ENCODE measurements at regions of chr1 and their contacts with region 1.

Region 1: DNA sequence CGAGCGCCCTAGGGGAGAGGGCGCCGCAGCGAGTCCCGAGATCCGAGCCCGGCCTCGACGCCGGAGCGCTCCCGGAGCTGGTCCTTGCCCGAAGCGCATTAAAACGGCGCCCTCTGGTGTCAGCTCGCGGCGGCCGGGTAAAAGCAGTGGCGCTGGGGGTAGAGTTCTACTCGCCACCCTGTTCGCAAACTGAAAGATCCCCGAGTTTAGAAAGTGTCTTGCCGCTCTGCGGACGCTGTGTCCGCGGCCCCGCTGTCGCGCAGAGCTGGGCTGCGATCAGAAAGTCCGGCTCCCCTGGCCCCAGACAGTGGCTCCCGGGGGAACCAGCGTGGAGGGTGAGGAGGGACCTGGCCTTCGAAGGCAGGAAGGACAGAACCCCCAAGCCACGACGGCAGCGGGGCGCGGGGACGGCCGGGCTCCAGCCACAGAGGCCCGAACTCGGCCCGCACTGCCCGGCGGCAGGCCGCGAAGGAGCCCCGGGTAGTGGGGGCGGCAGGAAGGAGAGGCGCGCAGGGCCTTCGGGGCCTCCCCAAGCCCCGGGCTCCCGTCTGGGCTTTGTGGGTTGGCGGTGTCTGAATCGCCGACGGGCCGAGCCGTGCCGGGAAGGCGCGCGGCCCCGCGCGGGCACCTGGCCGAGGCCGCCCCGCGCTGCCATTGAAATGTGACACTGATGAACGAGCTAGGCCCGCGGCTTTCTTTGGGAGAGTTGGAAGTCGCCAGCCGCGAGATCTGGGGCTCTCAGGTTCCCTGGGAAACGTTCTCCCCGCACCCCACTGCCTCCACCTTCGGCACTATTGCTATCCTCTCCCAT is 39.1 kb upstream of the NFIA start:
- DNase-seq: peak; percentile 90 to 95 (median 93)
- H3K4me3 ChIP-seq: peak overlapping the region in 3 of 4 donors; percentile 15 to 65 (median 63)
- H3K27ac ChIP-seq: peak overlapping the region in 4 of 5 donors; percentile 76 to 89 (median 85)
- H3K4me1 ChIP-seq: peaks cover 0 to 5% of the 10 kb centered on the region in 2 donors
- H3K27me3 ChIP-seq: no peaks in the 10 kb centered on the region
- CTCF ChIP-seq: peak; percentile 78 to 94 (median 92)
- POLR2A ChIP-seq: peak in 1 of 2 donors; percentile 66

Region 2: DNA sequence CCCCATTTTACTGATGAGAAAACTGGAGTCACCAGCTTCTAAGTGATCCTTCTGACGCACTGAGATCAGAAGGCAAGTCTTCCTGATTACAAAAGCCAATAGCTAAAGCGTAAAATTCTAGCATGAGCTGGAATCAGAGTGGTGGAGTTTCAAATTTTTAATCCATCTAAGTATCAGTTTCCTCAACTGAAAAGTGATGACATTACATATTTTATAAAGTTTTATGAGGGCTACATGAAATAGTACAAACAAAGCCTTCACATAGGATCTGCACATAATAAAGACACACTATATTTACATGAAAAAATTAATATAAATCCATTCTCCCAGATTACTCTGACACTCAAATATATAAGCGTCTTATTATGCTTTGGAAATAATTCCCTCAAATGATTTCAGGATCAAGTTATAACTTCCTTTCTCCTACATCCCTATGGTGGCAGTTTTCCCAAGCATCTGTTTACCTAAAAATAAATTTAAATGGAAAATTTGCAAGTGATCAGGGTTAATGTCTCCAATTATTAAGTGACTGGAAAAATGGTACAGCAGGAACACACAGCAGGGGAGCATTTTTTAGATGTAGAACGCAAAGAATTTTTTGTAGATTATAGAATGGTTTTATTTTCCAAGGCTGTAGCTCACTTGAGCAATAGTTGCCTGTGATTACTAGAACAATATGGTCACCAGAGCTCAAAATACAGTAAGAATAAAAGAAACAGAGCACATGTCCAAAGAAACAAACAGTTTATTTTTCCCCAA is 479.3 kb before region 1 on chr1:
- intact Hi-C with region 1: no loop called
- DNase-seq: no peak
- H3K4me3 ChIP-seq: no peak overlapping the region
- H3K27ac ChIP-seq: no peak overlapping the region
- H3K4me1 ChIP-seq: peaks cover 0 to 4% of the 10 kb centered on the region in 2 donors
- H3K27me3 ChIP-seq: no peaks in the 10 kb centered on the region
- CTCF ChIP-seq: no peak
- POLR2A ChIP-seq: no peak

Region 3: GRCh38 chr1:60848583-60849188 is 194.5 kb before region 1 on chr1:
- intact Hi-C with region 1: loop called (anchors 5 to 10 kb)
- DNase-seq: no peak
- H3K4me3 ChIP-seq: no peak overlapping the region
- H3K27ac ChIP-seq: no peak overlapping the region
- H3K4me1 ChIP-seq: no peaks in the 10 kb centered on the region
- H3K27me3 ChIP-seq: no peaks in the 10 kb centered on the region
- CTCF ChIP-seq: peak; percentile 30 to 68 (median 48)
- POLR2A ChIP-seq: no peak

Region 4: GRCh38 chr1:60978421-60979357 is 64.5 kb before region 1 on chr1:
- intact Hi-C with region 1: loop called (anchors 2 to 5 kb)
- DNase-seq: peak; percentile 54 to 79 (median 64)
- H3K4me3 ChIP-seq: no peak overlapping the region
- H3K27ac ChIP-seq: no peak overlapping the region
- H3K4me1 ChIP-seq: no peaks in the 10 kb centered on the region
- H3K27me3 ChIP-seq: no peaks in the 10 kb centered on the region
- CTCF ChIP-seq: peak; percentile 35 to 67 (median 64)
- POLR2A ChIP-seq: no peak

Region 5: GRCh38 chr1:60984062-60984799 is 59.0 kb before region 1 on chr1:
- intact Hi-C with region 1: loop called (anchors 2 to 5 kb)
- DNase-seq: peak in 6 of 7 donors; percentile 13 to 60 (median 30)
- H3K4me3 ChIP-seq: no peak overlapping the region
- H3K27ac ChIP-seq: peak overlapping the region in 2 of 5 donors; percentile 65 to 70
- H3K4me1 ChIP-seq: peaks cover 5 to 10% of the 10 kb centered on the region in 2 donors
- H3K27me3 ChIP-seq: no peaks in the 10 kb centered on the region
- CTCF ChIP-seq: no peak
- POLR2A ChIP-seq: no peak

Region 6: GRCh38 chr1:61174060-61174795 is 131.0 kb after region 1 on chr1:
- intact Hi-C with region 1: no loop called
- DNase-seq: no peak
- H3K4me3 ChIP-seq: no peak overlapping the region
- H3K27ac ChIP-seq: peak overlapping the region in 1 of 5 donors; percentile 13
- H3K4me1 ChIP-seq: peaks cover 46 to 56% of the 10 kb centered on the region in 2 donors
- H3K27me3 ChIP-seq: no peaks in the 10 kb centered on the region
- CTCF ChIP-seq: no peak
- POLR2A ChIP-seq: no peak

Region 7: DNA sequence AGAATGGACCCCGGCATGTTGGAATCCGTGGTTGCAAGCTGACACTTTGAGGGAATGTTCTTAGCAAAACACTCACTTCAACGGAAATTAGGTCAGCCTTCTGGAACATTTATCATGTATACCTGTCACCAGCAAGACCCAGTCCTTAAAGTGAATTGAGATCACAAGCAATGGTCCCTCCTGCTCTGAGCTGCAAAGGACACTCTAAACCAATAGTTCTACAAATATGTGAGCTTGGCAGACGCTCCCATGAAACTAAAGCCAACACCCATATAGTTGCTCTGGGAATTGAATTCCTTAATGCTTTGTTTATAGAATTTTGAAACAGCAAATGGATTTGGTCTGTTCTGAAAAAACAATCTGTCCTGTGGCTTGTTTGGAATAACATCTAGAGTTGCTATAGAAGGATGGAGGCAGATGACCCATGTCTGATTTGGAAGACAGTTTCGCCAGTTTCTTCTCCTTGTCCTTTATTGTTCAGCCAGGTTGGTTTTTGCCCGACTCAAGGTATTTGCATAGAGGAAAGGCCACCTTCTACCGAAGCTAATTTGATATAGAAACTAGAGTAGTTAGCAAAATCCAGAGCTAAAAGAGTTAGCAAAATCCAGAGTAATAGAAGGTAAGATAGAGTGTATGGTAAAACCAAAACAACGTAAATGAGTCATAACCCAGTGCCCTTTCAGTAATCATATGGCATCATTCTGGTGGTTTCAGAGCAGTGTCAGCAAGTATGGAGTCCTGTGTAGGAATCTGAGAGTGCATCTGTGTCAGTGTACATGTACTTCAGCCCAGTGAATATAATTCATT is 275.3 kb after region 1 on chr1:
- intact Hi-C with region 1: no loop called
- DNase-seq: peak in 6 of 7 donors; percentile 12 to 61 (median 32)
- H3K4me3 ChIP-seq: no peak overlapping the region
- H3K27ac ChIP-seq: peak overlapping the region in 2 of 5 donors; percentile 44 to 76
- H3K4me1 ChIP-seq: peaks cover 4 to 22% of the 10 kb centered on the region in 2 donors
- H3K27me3 ChIP-seq: no peaks in the 10 kb centered on the region
- CTCF ChIP-seq: no peak
- POLR2A ChIP-seq: no peak